Caco-2 (cell line): ENCODE measurements at regions of chr11 and their contacts with region 1.

Region 1: GRCh38 chr11:114262681-114263512 is 33.3 kb upstream of the NNMT start:
- DNase-seq: peak; percentile 74 to 77
- H3K4me3 ChIP-seq: no peak overlapping the region
- H3K4me3 Mint-ChIP-seq: no peak overlapping the region
- H3K27ac Mint-ChIP-seq: no peak overlapping the region
- H3K4me1 ChIP-seq: peaks cover 13% of the 10 kb centered on the region
- H3K4me1 Mint-ChIP-seq: no peaks in the 10 kb centered on the region
- H3K27me3 ChIP-seq: 0 out of 2 replicates have a peak, but pooled peaks cover 1% of the 10 kb centered on the region
- H3K27me3 Mint-ChIP-seq: no peaks in the 10 kb centered on the region
- CTCF ChIP-seq: peak; percentile 93 to 96

Region 2: DNA sequence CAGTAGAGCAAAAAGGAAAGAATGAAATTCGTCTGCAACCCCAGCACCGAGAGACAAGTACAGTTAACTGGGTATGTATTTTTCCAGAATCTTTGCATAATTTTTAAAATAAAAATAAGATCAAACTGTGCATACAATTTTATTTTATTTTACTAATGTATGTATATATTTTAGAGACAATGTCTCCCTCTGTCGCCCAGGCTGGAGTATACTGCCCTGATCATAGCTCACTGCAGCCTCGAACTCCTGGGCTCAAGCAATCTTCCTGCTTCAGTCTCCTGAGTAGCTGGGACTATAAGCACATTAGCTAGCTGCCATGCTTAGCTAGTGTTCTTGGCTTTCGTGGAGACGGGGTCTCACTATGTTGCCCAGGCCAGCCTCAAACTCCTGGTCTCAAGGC is 768.9 kb before region 1 on chr11:
- CTCF ChIA-PET with region 1: no interaction called
- POLR2A ChIA-PET with region 1: no interaction called
- intact Hi-C with region 1: no loop called
- DNase-seq: no peak
- H3K4me3 ChIP-seq: no peak overlapping the region
- H3K4me3 Mint-ChIP-seq: no peak overlapping the region
- H3K27ac Mint-ChIP-seq: no peak overlapping the region
- H3K4me1 ChIP-seq: no peaks in the 10 kb centered on the region
- H3K4me1 Mint-ChIP-seq: no peaks in the 10 kb centered on the region
- H3K27me3 ChIP-seq: no peaks in the 10 kb centered on the region
- H3K27me3 Mint-ChIP-seq: no peaks in the 10 kb centered on the region
- CTCF ChIP-seq: no peak

Region 3: DNA sequence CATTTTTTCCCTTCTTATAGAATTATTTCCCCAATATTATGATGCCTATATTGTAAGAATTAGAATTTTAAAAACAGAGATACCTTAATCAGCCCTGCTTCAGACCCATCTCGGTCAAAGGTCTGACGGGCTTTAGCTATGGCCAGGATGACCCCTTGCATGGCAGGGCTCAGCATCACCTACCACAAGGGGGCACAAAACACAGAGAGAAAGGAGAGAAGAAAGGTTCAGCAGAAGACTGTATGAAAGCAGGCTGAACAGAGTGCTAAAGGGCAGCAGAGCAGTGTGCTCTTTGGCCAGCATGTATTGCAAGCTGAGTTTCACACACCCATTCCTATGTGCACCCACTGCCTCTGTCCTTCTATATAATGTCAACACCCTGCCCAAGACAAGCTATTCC is 456.5 kb before region 1 on chr11:
- CTCF ChIA-PET with region 1: interaction called, 14 read pairs
- POLR2A ChIA-PET with region 1: no interaction called
- intact Hi-C with region 1: loop called (anchors 1 kb)
- DNase-seq: peak; percentile 77 to 82
- H3K4me3 ChIP-seq: no peak overlapping the region
- H3K4me3 Mint-ChIP-seq: no peak overlapping the region
- H3K27ac Mint-ChIP-seq: no peak overlapping the region
- H3K4me1 ChIP-seq: no peaks in the 10 kb centered on the region
- H3K4me1 Mint-ChIP-seq: no peaks in the 10 kb centered on the region
- H3K27me3 ChIP-seq: no peaks in the 10 kb centered on the region
- H3K27me3 Mint-ChIP-seq: no peaks in the 10 kb centered on the region
- CTCF ChIP-seq: peak; percentile 87 to 90

Region 4: GRCh38 chr11:113994077-113994954 is 268.6 kb before region 1 on chr11:
- CTCF ChIA-PET with region 1: interaction called, 99 read pairs
- POLR2A ChIA-PET with region 1: no interaction called
- intact Hi-C with region 1: loop called (anchors 1 kb)
- DNase-seq: peak in 1 of 2 experiments; percentile 69
- H3K4me3 ChIP-seq: no peak overlapping the region
- H3K4me3 Mint-ChIP-seq: no peak overlapping the region
- H3K27ac Mint-ChIP-seq: no peak overlapping the region
- H3K4me1 ChIP-seq: no peaks in the 10 kb centered on the region
- H3K4me1 Mint-ChIP-seq: no peaks in the 10 kb centered on the region
- H3K27me3 ChIP-seq: no peaks in the 10 kb centered on the region
- H3K27me3 Mint-ChIP-seq: peaks cover 18% of the 10 kb centered on the region
- CTCF ChIP-seq: peak; percentile 93 to 96

Region 5: DNA sequence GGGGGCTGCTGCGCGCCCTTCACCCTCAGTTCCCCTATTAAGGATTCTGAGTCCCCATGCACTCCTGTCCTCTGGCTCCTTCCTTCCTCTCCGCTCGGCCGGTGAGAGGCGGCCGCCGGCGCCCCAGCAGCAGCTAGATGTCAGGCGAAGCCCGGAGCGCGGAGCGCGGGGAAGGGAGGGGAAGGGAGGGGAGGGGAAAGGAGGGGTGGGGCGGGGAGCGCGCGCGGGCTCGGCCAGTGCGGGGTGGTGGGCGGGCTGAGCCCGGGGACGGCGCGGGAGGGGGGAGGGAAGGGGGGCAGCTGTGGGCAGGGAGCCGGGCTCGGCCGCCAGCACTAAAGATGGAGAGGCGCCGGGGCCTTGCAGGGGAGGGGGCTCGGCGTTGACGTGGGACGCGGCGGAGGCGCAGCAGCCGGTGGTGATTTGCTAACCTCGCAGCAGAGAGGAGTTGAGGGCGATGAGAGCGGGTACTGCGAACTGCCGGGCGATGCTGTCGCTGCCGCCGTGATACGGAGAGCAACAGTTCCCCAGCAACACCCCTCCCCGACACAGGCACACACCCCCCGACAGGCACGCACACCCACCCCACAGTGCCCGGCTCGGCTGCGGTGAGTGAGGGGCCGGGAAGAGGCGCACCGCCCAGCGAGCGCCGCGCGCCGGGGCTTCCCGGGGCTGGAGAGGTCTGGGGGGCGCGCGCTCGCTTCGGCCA is 203.5 kb before region 1 on chr11 and contains the start of gene ZBTB16:
- CTCF ChIA-PET with region 1: interaction called, 9 read pairs
- POLR2A ChIA-PET with region 1: no interaction called
- intact Hi-C with region 1: loop called (anchors 1 kb)
- DNase-seq: peak; percentile 83 to 88
- H3K4me3 ChIP-seq: peak within 1 kb of the TSS; percentile 78
- H3K4me3 Mint-ChIP-seq: peak within 1 kb of the TSS; percentile 86
- H3K27ac Mint-ChIP-seq: peak within 1 kb of the TSS; percentile 74
- H3K4me1 ChIP-seq: peaks cover 10% of the 10 kb centered on the region; the same call in 1 of the 2 replicates
- H3K4me1 Mint-ChIP-seq: peaks cover 16% of the 10 kb centered on the region
- H3K27me3 ChIP-seq: no peaks in the 10 kb centered on the region
- H3K27me3 Mint-ChIP-seq: peaks cover 11% of the 10 kb centered on the region
- CTCF ChIP-seq: peak in 1 of 2 experiments; percentile 78
- total RNA-seq, gene ZBTB16: 10.6 and 12.7 TPM in 2 replicates

Region 6: GRCh38 chr11:114180301-114181055 is 82.4 kb before region 1 on chr11:
- CTCF ChIA-PET with region 1: interaction called, 12 read pairs
- POLR2A ChIA-PET with region 1: no interaction called
- intact Hi-C with region 1: loop called (anchors 1 kb)
- DNase-seq: peak; percentile 64 to 73
- H3K4me3 ChIP-seq: no peak overlapping the region
- H3K4me3 Mint-ChIP-seq: no peak overlapping the region
- H3K27ac Mint-ChIP-seq: no peak overlapping the region
- H3K4me1 ChIP-seq: peaks cover 22% of the 10 kb centered on the region
- H3K4me1 Mint-ChIP-seq: peaks cover 25% of the 10 kb centered on the region
- H3K27me3 ChIP-seq: no peaks in the 10 kb centered on the region
- H3K27me3 Mint-ChIP-seq: no peaks in the 10 kb centered on the region
- CTCF ChIP-seq: peak; percentile 80 to 91

Region 7: GRCh38 chr11:114209904-114210303 is 53.0 kb before region 1 on chr11:
- CTCF ChIA-PET with region 1: interaction called, 6 read pairs
- POLR2A ChIA-PET with region 1: no interaction called
- intact Hi-C with region 1: loop called (anchors 2 kb)
- DNase-seq: peak; percentile 90 to 93
- H3K4me3 ChIP-seq: 0 out of 2 replicates have a peak overlapping the region, but pooled peaks have one; percentile 9
- H3K4me3 Mint-ChIP-seq: peak overlapping the region; percentile 68
- H3K27ac Mint-ChIP-seq: peak overlapping the region; percentile 71
- H3K4me1 ChIP-seq: peaks cover 53% of the 10 kb centered on the region
- H3K4me1 Mint-ChIP-seq: peaks cover 34% of the 10 kb centered on the region
- H3K27me3 ChIP-seq: no peaks in the 10 kb centered on the region
- H3K27me3 Mint-ChIP-seq: no peaks in the 10 kb centered on the region
- CTCF ChIP-seq: no peak